IMR-90 (cell line): ENCODE measurements at regions of chr2 and their contacts with region 1.

Region 1: DNA sequence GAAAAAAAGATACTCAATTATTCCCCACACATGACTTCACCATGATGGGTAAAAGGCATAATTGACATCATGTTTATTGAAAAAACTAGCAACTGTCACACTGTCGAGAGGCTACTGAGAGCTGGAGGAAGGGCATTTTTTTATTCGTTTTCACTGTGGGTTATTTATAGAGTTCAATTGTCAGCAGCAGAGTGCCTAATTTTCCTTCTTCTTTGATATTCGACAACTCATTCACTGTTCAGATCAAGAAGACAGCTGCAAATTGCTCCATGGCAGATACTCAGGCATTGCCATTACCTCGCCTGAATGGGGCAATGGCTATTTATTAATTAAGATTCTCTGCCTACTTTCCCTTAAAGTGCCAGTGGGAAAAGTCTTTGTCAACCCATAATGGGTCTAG is 197.5 kb upstream of the NRP2 start:
- DNase-seq: no peak
- ATAC-seq: no peak
- H3K4me3 ChIP-seq: no peak overlapping the region
- H3K27ac ChIP-seq: no peak overlapping the region
- H3K4me1 ChIP-seq: peaks cover 2% of the 10 kb centered on the region; the same call in 1 of the 2 replicates
- H3K27me3 ChIP-seq: no peaks in the 10 kb centered on the region
- CTCF ChIP-seq: no peak
- POLR2A ChIP-seq: no peak
- RAD21 ChIP-seq: no peak

Region 2: GRCh38 chr2:205188239-205188993 is 296.3 kb before region 1 on chr2:
- CTCF ChIA-PET with region 1: no interaction called
- POLR2A ChIA-PET with region 1: no interaction called
- dilution Hi-C with region 1: no loop called
- in situ Hi-C with region 1: no loop called
- intact Hi-C with region 1: no loop called
- DNase-seq: peak; percentile 82
- ATAC-seq: peak; percentile 75
- H3K4me3 ChIP-seq: no peak overlapping the region
- H3K27ac ChIP-seq: peak overlapping the region; percentile 49; the same call in 1 of the 2 replicates
- H3K4me1 ChIP-seq: peaks cover 8% of the 10 kb centered on the region; the same call in 1 of the 2 replicates
- H3K27me3 ChIP-seq: no peaks in the 10 kb centered on the region
- CTCF ChIP-seq: no peak
- POLR2A ChIP-seq: no peak
- RAD21 ChIP-seq: no peak

Region 3: DNA sequence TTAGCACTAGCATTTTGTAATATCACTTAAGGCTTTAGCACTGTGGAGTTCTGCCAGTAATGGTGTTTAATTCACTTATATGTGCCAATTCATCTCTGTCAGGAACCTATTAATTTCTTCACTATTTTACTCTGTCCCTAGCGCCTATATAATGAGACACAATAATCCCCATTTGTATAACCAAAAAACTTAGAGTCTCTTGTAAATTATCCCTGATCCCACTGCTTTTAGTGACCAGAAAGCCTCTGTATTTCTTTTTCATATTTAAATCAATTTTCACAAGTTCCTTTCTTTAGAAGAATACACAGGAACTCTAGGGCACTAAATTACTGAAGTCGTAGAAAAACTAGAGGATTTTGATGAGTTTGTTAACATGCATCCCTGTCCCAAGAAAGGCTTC is 45.1 kb before region 1 on chr2:
- CTCF ChIA-PET with region 1: no interaction called
- POLR2A ChIA-PET with region 1: no interaction called
- dilution Hi-C with region 1: no loop called
- in situ Hi-C with region 1: no loop called
- intact Hi-C with region 1: no loop called
- DNase-seq: no peak
- ATAC-seq: no peak
- H3K4me3 ChIP-seq: no peak overlapping the region
- H3K27ac ChIP-seq: no peak overlapping the region
- H3K4me1 ChIP-seq: no peaks in the 10 kb centered on the region; the same call in 1 of the 2 replicates
- H3K27me3 ChIP-seq: no peaks in the 10 kb centered on the region
- CTCF ChIP-seq: no peak
- POLR2A ChIP-seq: no peak
- RAD21 ChIP-seq: no peak

Region 4: GRCh38 chr2:205456682-205457081 is 28.1 kb before region 1 on chr2:
- CTCF ChIA-PET with region 1: interaction called, 3 read pairs
- POLR2A ChIA-PET with region 1: no interaction called
- dilution Hi-C with region 1: no loop called
- in situ Hi-C with region 1: no loop called
- intact Hi-C with region 1: loop called (anchors 2 kb)
- DNase-seq: no peak
- ATAC-seq: no peak
- H3K4me3 ChIP-seq: no peak overlapping the region
- H3K27ac ChIP-seq: no peak overlapping the region
- H3K4me1 ChIP-seq: no peaks in the 10 kb centered on the region
- H3K27me3 ChIP-seq: no peaks in the 10 kb centered on the region
- CTCF ChIP-seq: no peak
- POLR2A ChIP-seq: no peak
- RAD21 ChIP-seq: no peak